ENCODE measurements at regions of chr5 and their contacts with region 1.

Region 1: GRCh38 chr5:15003511-15003920 is 131.9 kb upstream of the ANKH start:
- DNase-seq: peak; percentile 51 to 73
- H3K4me3 ChIP-seq: no peak overlapping the region
- H3K27ac ChIP-seq: no peak overlapping the region
- H3K4me1 ChIP-seq: peaks cover 7% of the 10 kb centered on the region
- H3K27me3 ChIP-seq: peaks cover 2% of the 10 kb centered on the region; the same call in 1 of the 2 replicates
- CTCF ChIP-seq: peak; percentile 83

Region 2: DNA sequence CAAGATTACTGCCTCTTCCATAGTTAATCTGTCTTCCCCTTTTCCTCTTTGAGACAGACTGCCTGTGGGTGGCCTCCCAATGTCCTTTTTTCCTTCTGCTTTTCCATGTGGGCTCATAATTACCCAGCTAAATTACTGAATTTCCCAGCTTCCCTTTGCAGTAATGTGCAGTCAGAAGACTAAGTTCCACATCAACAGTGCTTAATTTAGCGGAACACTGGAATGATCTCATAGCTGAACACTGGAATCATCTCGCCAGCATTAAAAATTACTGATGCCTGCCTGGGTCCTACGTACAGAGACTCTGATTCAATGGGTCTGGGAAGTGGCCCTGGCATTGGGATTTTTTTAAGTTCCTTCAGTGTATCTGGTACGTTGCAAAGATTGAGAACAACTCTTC is 1143.4 kb before region 1 on chr5:
- CTCF ChIA-PET with region 1: no interaction called
- POLR2A ChIA-PET with region 1: no interaction called
- intact Hi-C with region 1: no loop called
- DNase-seq: no peak
- H3K4me3 ChIP-seq: no peak overlapping the region
- H3K27ac ChIP-seq: no peak overlapping the region
- H3K4me1 ChIP-seq: no peaks in the 10 kb centered on the region
- H3K27me3 ChIP-seq: no peaks in the 10 kb centered on the region
- CTCF ChIP-seq: no peak

Region 3: DNA sequence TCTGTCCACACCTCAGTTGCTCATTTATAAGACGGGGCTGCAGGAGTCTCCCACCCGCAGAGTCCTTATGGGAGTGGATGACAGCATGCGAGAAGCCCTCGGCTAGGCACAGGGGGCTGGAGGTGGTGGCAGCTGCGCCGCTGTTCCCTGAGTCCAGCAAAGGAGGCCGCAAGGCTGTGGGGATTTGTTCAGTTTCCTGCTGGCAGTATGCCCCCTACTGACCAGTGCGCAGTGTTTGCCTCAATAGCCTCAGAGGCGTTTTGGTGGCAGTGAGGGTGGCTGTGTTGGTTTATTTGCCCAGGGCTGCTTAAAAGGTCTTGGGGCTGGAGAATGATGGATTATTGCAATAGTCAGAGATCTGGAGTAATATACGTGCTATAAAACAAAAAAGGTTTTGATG is 598.2 kb before region 1 on chr5:
- CTCF ChIA-PET with region 1: no interaction called
- POLR2A ChIA-PET with region 1: no interaction called
- intact Hi-C with region 1: loop called (anchors 2 kb)
- DNase-seq: peak in 1 of 2 experiments; percentile 73
- H3K4me3 ChIP-seq: no peak overlapping the region
- H3K27ac ChIP-seq: no peak overlapping the region
- H3K4me1 ChIP-seq: no peaks in the 10 kb centered on the region
- H3K27me3 ChIP-seq: no peaks in the 10 kb centered on the region
- CTCF ChIP-seq: 0 out of 2 replicates have a peak, but pooled peaks have one; percentile 34

Region 4: GRCh38 chr5:14581333-14581890 is 422.1 kb before region 1 on chr5 and contains the start of gene OTULINL:
- CTCF ChIA-PET with region 1: no interaction called
- POLR2A ChIA-PET with region 1: no interaction called
- intact Hi-C with region 1: loop called (anchors 5 kb)
- DNase-seq: peak; percentile 48 to 93
- H3K4me3 ChIP-seq: peak within 1 kb of the TSS; percentile 75
- H3K27ac ChIP-seq: no peak within 1 kb of the TSS
- H3K4me1 ChIP-seq: 0 out of 2 replicates have a peak, but pooled peaks cover 6% of the 10 kb centered on the region
- H3K27me3 ChIP-seq: peaks cover 36% of the 10 kb centered on the region
- CTCF ChIP-seq: no peak
- total RNA-seq, gene OTULINL: 4.1 and 7.1 TPM in 2 replicates

Region 5: DNA sequence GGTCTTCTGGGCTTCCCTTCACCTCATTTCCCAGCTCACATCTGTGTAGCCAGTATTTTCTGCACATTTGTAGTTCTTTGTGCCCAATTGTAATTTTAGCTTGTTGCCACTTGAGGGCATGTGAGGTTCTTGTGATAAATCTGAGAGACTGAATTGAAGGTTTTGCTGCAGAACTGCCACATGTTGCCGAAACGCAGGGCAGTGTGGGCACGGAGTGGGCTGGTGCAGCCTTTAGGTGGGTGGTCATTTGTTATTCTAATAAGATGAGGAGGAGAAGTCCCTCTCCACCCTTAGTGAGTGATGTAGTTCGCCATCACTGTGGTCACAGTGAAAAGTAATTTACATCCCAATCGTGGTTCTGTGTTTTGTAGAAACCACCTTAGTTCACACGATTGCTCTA is 317.8 kb before region 1 on chr5:
- CTCF ChIA-PET with region 1: interaction called, 8 read pairs
- POLR2A ChIA-PET with region 1: no interaction called
- intact Hi-C with region 1: loop called (anchors 1 kb)
- DNase-seq: peak; percentile 39 to 54
- H3K4me3 ChIP-seq: no peak overlapping the region
- H3K27ac ChIP-seq: no peak overlapping the region
- H3K4me1 ChIP-seq: no peaks in the 10 kb centered on the region
- H3K27me3 ChIP-seq: no peaks in the 10 kb centered on the region
- CTCF ChIP-seq: peak; percentile 85

Region 6: DNA sequence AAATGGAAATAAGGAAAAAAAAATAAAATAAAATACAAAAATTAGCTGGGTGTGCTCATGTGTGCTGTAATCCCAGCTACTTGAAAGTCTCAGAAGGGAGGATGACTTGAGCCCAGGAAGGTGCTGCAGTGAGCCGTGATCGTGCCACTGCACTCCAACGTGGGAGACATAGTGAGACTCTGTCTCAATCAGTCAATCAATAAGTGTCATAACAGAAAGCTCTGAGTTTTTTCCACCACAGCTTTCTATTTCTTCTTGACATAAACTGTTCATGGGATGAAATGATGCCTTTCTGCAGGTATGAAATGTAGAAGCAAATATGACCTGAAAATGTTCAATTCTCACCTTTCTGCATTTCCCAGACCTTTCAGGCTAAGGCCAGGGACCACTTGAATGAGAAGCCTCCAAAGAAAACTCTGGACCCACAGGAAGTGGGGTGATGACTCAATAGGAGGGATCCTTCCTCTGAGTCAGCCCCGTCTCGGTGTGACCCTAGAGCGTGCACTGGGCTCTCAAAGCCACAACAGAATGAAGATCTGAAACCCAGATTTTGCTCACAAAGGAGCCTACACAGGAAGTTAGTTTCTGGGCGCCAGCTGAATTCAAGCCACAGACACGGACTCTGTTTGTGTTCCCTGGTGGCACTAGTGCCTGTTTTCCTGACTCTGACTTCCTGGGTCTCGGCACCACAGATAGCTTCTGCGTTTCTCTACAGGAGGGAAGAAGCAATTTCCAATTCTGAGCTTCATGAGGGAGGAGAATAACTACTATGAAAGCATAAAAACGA is 194.0 kb before region 1 on chr5:
- CTCF ChIA-PET with region 1: no interaction called
- POLR2A ChIA-PET with region 1: no interaction called
- intact Hi-C with region 1: loop called (anchors 2 kb)
- DNase-seq: peak; percentile 69 to 86
- H3K4me3 ChIP-seq: 0 out of 2 replicates have a peak overlapping the region, but pooled peaks have one; percentile 2
- H3K27ac ChIP-seq: peak overlapping the region; percentile 73
- H3K4me1 ChIP-seq: peaks cover 20% of the 10 kb centered on the region
- H3K27me3 ChIP-seq: no peaks in the 10 kb centered on the region
- CTCF ChIP-seq: no peak

Region 7: DNA sequence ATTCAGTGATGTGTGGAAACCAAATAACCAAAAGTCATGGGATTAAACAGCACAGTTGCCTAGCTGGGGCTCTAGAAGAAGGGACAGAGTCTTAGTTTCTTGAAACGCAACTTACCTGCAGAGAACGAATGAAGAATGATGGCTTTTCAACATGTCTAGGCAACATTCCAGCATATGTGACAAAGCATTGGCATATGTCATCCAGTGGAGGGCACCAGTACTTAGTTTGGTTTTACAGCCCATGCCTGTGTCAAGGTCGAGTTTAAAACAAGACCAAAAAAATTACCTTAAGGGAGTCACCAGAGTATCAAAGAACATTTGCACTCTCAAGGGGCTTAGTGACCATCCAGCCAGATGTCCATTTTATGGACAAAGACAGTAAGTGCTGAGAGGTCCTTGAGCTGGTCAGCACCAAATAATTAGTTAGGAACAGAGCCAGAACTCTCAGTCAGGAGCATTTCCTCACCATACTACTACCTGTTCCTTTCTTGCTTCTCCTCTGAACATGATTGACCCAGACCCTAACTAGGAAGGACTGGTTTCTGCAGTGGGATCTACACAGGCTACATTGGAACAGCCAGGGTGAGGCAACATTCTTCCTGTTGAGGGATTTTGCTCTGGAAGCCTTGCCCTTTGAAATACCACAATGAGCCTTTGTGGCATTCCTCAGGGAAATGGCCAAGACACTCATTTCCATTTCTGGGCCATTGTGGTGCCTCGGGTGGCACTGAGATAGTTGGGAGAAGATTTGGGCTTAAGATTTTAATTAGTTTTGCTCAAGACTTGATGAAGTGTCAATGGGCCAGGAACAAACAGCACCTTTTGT is 56.5 kb before region 1 on chr5:
- CTCF ChIA-PET with region 1: interaction called, 9 read pairs
- POLR2A ChIA-PET with region 1: no interaction called
- intact Hi-C with region 1: loop called (anchors 1 kb)
- DNase-seq: peak in 1 of 2 experiments; percentile 24
- H3K4me3 ChIP-seq: no peak overlapping the region
- H3K27ac ChIP-seq: no peak overlapping the region
- H3K4me1 ChIP-seq: no peaks in the 10 kb centered on the region
- H3K27me3 ChIP-seq: peaks cover 16% of the 10 kb centered on the region; the same call in 1 of the 2 replicates
- CTCF ChIP-seq: peak; percentile 49

Region 8: GRCh38 chr5:15092801-15093200 is 89.3 kb after region 1 on chr5:
- CTCF ChIA-PET with region 1: no interaction called
- POLR2A ChIA-PET with region 1: no interaction called
- intact Hi-C with region 1: no loop called
- DNase-seq: no peak
- H3K4me3 ChIP-seq: no peak overlapping the region
- H3K27ac ChIP-seq: no peak overlapping the region
- H3K4me1 ChIP-seq: no peaks in the 10 kb centered on the region
- H3K27me3 ChIP-seq: peaks cover 20% of the 10 kb centered on the region
- CTCF ChIP-seq: no peak